ENCODE measurements at regions of chr15 and their contacts with region 1.

Region 1: DNA sequence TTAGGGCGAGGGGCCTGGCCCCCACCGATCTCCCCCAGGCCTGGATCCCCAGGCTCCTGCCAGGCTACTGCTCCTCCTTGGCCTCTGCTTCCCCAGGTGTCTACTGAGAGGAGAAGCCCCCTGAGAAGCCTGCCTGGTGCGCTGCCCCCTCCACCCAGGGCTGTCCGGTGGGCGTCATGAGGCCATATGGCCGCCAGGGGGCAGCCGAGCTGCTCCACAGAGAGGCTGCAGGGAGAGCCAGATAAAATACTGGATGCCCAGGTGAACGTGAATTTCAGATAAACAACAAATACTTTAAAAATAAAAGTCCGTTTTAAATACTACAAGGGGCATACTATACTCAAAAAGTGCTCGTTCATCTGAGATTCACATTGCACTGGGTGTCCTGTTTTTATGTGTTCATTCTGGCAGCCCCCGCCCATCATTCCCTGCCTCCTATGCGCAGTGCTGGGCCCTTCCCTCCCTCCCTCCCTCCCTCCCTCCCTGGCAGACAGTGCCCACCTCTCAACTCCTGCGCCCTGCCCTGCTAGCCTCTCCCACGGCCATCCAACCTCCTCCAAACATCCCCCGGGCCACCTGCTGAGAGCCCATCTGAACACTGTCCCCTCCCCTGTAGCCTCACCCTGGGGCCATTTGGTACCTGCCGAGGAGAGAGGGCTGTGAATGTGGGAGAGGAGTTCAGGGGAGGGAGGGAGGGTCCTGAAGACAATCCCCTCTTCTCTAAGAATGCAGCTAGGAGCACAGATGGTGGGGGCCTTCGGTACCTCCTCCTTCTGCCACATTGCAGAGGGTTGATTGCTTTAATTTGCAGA is 29.6 kb downstream of the PSTPIP1 start:
- DNase-seq: peak; percentile 81
- ATAC-seq: no peak
- H3K4me3 Mint-ChIP-seq: no peak overlapping the region
- H3K27ac Mint-ChIP-seq: peak overlapping the region; percentile 100
- H3K4me1 Mint-ChIP-seq: peaks cover 58% of the 10 kb centered on the region
- H3K27me3 Mint-ChIP-seq: no peaks in the 10 kb centered on the region
- CTCF ChIP-seq: peak; percentile 99

Region 2: DNA sequence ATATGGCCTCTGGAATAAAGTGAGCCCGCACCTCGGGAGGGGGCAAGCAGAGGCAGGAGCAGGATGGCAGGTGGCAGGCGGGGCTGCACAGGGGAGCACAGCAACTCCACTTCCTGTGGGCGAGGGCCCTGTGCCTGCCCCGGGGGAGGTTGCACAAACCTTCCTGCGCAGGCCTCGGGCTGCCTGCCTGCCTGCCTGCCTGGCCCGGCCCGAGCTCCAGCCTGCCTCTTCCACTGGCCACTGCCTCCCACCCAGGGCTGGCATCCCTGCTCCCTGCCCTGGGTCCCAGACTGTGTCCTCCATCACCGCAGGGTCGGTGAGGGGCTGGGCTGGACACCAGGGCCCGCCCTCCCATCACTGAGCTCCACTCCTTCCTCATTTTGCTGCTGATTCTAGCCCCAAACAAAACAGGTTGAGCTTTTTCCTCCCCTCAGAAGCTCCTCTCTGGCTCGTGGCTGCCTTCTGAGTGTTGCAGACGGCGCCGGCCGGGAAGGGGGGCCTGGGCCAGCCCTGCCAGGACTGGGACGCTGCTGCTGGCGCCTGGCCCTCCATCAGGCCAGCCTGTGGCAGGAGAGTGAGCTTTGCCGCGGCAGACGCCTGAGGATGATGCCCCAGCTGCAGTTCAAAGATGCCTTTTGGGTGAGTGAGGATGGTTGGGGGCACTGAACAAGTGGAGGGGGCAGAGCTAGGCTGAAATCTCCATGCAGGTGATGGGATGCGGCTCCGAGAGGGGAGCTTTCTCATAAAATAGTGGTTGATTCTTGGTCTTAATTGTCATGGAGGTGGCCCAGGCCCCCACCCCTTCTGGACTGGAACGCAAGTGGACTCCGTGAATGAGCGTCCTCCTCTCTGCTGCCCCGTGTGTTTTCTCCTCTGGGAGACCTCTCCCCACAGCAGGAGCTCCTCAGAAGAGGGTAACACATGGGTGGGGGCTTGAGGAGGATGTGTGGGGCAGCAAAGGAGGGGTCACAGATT is 29.2 kb before region 1 on chr15 and contains the start of gene PSTPIP1:
- CTCF ChIA-PET with region 1: interaction called, 30 read pairs
- POLR2A ChIA-PET with region 1: interaction called, 62 read pairs
- intact Hi-C with region 1: no loop called
- DNase-seq: peak; percentile 83
- ATAC-seq: peak; percentile 69
- H3K4me3 Mint-ChIP-seq: peak within 1 kb of the TSS; percentile 95
- H3K27ac Mint-ChIP-seq: peak within 1 kb of the TSS; percentile 98
- H3K4me1 Mint-ChIP-seq: peaks cover 61% of the 10 kb centered on the region
- H3K27me3 Mint-ChIP-seq: no peaks in the 10 kb centered on the region
- CTCF ChIP-seq: no peak
- total RNA-seq, gene PSTPIP1: 113 to 121 TPM

Region 3: DNA sequence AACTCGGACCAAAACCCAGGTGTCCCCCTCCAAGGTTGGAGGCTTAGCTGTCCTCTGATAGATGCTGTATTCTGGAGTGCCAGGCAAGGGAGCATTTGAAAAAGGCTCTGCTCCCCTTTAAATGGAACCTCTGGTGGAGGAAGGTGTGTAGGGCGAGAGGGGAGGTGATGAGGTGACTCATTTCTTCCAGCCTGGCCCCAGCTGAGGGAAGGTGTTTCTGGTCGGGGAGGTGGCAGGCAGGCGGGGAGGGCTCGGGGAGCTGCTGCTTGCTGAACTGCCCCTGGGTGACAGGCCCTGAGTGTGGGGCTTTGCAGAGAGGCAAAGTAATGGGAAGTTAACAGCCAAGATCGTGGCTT is 10.7 kb before region 1 on chr15:
- CTCF ChIA-PET with region 1: interaction called, 21 read pairs
- POLR2A ChIA-PET with region 1: interaction called, 17 read pairs
- intact Hi-C with region 1: no loop called
- DNase-seq: peak; percentile 97
- ATAC-seq: peak; percentile 83
- H3K4me3 Mint-ChIP-seq: peak overlapping the region; percentile 57
- H3K27ac Mint-ChIP-seq: peak overlapping the region; percentile 100
- H3K4me1 Mint-ChIP-seq: peaks cover 97% of the 10 kb centered on the region
- H3K27me3 Mint-ChIP-seq: no peaks in the 10 kb centered on the region
- CTCF ChIP-seq: peak; percentile 24

Region 4: GRCh38 chr15:77052556-77052955 is 28.1 kb after region 1 on chr15:
- CTCF ChIA-PET with region 1: interaction called, 13 read pairs
- POLR2A ChIA-PET with region 1: no interaction called
- intact Hi-C with region 1: no loop called
- DNase-seq: no peak
- ATAC-seq: no peak
- H3K4me3 Mint-ChIP-seq: no peak overlapping the region
- H3K27ac Mint-ChIP-seq: no peak overlapping the region
- H3K4me1 Mint-ChIP-seq: peaks cover 15% of the 10 kb centered on the region
- H3K27me3 Mint-ChIP-seq: no peaks in the 10 kb centered on the region
- CTCF ChIP-seq: no peak

Region 5: GRCh38 chr15:77144492-77145070 is 120.1 kb after region 1 on chr15:
- CTCF ChIA-PET with region 1: no interaction called
- POLR2A ChIA-PET with region 1: no interaction called
- intact Hi-C with region 1: no loop called
- DNase-seq: no peak
- ATAC-seq: no peak
- H3K4me3 Mint-ChIP-seq: no peak overlapping the region
- H3K27ac Mint-ChIP-seq: no peak overlapping the region
- H3K4me1 Mint-ChIP-seq: peaks cover 6% of the 10 kb centered on the region
- H3K27me3 Mint-ChIP-seq: no peaks in the 10 kb centered on the region
- CTCF ChIP-seq: no peak

Measured in activated CD8-positive, alpha-beta T cell treated with anti-CD3 and anti-CD28 coated beads for 36 hours (primary cell).